Brain microvascular endothelial cell (primary cell): ENCODE measurements at regions of chr3 and their contacts with region 1.

Region 1: DNA sequence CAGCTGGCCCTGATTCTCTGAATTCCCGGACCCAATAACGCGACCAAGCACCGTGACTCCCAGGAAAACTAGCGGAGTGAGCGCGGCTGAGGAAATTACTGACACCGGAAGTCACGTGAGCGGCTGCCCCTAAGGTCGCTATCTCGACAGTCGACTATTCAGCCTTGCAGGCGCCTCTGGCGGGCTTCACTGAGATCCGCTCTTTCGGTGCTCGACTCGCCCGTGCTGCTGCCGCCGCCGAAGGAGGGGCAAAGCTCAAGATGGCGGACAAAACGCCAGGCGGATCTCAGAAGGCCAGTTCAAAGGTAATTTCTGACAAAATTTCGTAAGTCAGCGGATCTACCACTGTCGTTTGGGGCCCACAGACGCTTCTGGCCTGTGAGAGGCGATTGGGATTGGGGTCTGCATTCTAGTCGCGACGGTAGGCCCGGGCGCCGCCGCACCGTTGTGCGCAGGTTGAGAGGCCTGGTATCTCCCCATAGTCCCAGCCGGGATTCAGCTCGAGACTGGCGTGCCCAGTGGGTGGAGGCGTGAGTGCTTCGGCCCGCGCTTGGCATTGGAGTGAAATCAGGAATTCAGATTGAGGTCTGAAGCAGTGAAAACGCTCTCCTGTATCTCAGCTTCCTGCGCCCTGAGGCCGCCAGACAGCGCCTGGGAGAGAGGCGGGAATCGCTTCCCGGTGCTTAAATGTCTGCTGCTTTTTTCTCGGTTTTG is at the start of gene U2SURP:
- DNase-seq: peak; percentile 98
- H3K4me3 ChIP-seq: peak within 1 kb of the TSS; percentile 98
- H3K27ac ChIP-seq: peak within 1 kb of the TSS; percentile 95
- H3K27me3 ChIP-seq: no peaks in the 10 kb centered on the region
- CTCF ChIP-seq: peak; percentile 11

Region 2: DNA sequence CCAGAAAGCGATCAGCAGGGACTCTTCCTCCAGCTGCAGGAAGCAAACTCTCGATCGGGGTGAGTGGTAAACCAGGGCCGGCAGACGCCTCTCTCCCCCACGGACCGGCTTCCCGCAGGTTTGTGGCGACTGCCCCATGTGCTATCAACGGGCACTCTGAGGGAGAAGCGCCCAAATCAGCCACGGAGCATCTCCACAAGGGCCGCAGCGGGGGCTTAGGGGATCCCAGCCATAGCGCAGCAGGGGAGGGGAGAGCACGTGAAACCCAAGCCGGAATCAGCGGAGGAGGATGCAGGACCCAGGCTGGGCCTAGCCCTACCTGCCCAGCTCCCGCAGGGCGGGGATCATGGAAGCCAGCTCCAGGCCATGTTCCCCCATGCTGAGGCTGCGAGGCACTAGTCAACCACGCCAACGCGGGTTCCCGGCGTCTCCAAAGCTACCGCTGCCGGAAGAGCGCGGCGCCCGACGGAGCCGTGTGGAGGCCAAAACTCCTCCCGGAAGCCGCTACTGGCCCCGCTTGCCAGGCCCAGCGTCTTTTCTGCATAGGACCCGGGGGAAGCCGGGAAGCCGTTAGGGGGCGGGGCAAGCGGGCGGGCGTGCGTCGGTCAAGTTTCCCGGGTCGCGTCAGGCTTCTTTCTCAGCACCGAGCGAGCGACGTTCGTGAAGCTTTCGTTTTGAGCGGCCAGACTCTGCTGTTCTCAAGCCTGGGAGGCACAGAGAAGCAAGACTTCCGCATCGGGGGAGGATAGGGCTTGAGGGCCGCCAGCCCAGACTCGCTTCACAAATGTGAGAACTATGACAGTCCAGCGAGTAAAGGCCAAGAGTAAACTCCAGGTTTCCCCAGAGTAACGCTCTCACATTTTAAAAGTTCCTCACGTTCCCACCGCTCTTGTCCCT is 423.0 kb before region 1 on chr3 and contains the start of gene ATR:
- in situ Hi-C with region 1: loop called (anchors 25 kb)
- DNase-seq: peak; percentile 97
- H3K4me3 ChIP-seq: peak within 1 kb of the TSS; percentile 97
- H3K27ac ChIP-seq: peak within 1 kb of the TSS; percentile 89
- H3K27me3 ChIP-seq: no peaks in the 10 kb centered on the region
- CTCF ChIP-seq: no peak

Region 3: DNA sequence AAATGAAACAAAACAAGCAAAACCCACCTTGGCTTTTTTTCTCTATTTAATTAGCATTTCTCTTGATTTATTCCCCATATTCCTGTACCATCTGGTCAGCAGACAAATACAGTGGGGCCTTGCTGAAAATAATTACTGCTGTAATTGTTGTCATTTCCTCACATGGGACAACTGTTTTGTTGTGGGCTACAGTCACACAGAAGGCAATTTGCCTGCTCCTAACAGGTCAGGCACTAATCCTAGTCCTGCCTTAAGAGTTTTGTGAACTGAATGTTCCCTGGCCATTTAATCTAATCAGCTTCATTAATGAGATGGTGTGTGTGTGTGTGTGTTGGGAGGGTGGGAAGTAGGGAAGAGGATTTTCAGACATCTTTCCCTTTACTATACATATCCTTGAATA is 266.1 kb before region 1 on chr3:
- in situ Hi-C with region 1: no loop called
- DNase-seq: no peak
- H3K4me3 ChIP-seq: no peak overlapping the region
- H3K27ac ChIP-seq: no peak overlapping the region
- H3K27me3 ChIP-seq: no peaks in the 10 kb centered on the region
- CTCF ChIP-seq: no peak

Region 4: GRCh38 chr3:143151004-143151731 is 149.6 kb after region 1 on chr3:
- in situ Hi-C with region 1: no loop called
- DNase-seq: no peak
- H3K4me3 ChIP-seq: no peak overlapping the region
- H3K27ac ChIP-seq: no peak overlapping the region
- H3K27me3 ChIP-seq: no peaks in the 10 kb centered on the region
- CTCF ChIP-seq: no peak